Esophagus squamous epithelium (tissue), 5 donors: ENCODE measurements at regions of chr9 and their contacts with region 1.

Region 1: GRCh38 chr9:100437860-100438805 is 11.2 kb downstream of the MSANTD3 start:
- DNase-seq: no peak
- H3K4me3 ChIP-seq: no peak overlapping the region
- H3K27ac ChIP-seq: no peak overlapping the region
- H3K4me1 ChIP-seq: peaks cover 0 to 6% (median 0%) of the 10 kb centered on the region in 3 donors
- H3K27me3 ChIP-seq: no peaks in the 10 kb centered on the region
- CTCF ChIP-seq: peak; percentile 79 to 97 (median 92)
- POLR2A ChIP-seq: no peak

Region 2: GRCh38 chr9:100352727-100353505 is 85.2 kb before region 1 on chr9 and contains the start of gene TEX10:
- intact Hi-C with region 1: loop called (anchors 10 kb)
- DNase-seq: peak; percentile 39
- H3K4me3 ChIP-seq: peak within 1 kb of the TSS; percentile 88 to 97 (median 92)
- H3K27ac ChIP-seq: peak within 1 kb of the TSS; percentile 86 to 92 (median 87)
- H3K4me1 ChIP-seq: peaks cover 3 to 40% (median 17%) of the 10 kb centered on the region in 3 donors
- H3K27me3 ChIP-seq: no peaks in the 10 kb centered on the region
- CTCF ChIP-seq: no peak
- POLR2A ChIP-seq: peak in 3 of 4 donors; percentile 42 to 72 (median 52)
- total RNA-seq, gene TEX10: 8.4 to 24.6 (median 19.3) TPM